HEK293T (cell line): ENCODE measurements at regions of chr19 and their contacts with region 1.

Region 1: DNA sequence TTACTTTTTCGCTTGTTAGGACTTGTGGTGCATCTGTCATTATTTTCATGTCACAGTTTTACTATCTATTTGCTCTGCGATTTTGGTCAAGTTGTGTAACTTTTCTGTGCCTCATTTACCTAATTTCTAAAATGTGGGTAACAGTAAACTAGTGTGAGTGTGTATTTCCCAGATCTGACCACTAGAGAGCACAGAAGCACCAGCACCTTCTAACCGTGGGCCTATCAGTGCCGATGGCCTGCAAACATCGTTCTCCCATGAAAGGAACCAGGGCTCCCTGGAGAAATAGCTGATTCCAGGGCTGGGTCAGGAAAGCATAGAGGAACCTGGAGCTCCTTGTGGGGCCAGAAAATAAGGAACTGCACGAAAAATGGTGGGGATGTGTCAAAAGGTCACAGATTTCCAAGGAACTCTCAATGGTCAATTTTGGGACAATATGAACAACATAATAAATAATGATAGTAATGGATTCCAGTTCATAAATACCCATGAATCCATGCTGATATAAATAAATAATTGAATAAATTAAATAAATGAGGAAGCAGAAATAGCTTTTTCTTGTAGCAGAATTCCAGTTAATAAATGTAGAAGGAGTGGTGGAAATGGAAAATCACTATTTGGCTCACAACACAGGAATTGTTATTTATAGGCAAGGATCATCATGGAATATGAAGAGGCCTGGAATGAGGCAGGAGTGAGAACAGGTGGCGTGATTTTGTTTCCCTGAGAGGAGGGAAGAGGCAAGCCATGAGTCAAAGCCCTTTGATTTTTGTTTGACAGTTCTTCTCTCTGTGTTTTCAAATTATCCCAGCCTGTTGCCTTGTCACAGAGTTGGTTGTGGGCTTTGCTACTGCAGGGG is 31.1 kb downstream of the CEACAM8 start:
- DNase-seq: peak; percentile 62

Region 2: GRCh38 chr19:42534391-42534790 is 29.2 kb before region 1 on chr19:
- CTCF ChIA-PET with region 1: no interaction called
- POLR2A ChIA-PET with region 1: no interaction called
- DNase-seq: no peak

Region 3: GRCh38 chr19:42596391-42597072 is 33.0 kb after region 1 on chr19:
- CTCF ChIA-PET with region 1: interaction called, 10 read pairs
- POLR2A ChIA-PET with region 1: no interaction called
- DNase-seq: peak; percentile 65